ENCODE measurements at regions of chr5 and their contacts with region 1.

Region 1: GRCh38 chr5:40688127-40688761 is 8.5 kb downstream of the PTGER4 start:
- DNase-seq: peak; percentile 97
- ATAC-seq: peak; percentile 63
- H3K4me3 ChIP-seq: peak overlapping the region; percentile 11
- H3K27ac ChIP-seq: peak overlapping the region; percentile 41
- H3K4me1 ChIP-seq: peaks cover 56% of the 10 kb centered on the region
- H3K27me3 ChIP-seq: no peaks in the 10 kb centered on the region
- CTCF ChIP-seq: peak; percentile 96

Region 2: GRCh38 chr5:39578887-39579497 is 1109.3 kb before region 1 on chr5:
- CTCF ChIA-PET with region 1: no interaction called
- POLR2A ChIA-PET with region 1: interaction called, 3 read pairs
- intact Hi-C with region 1: loop called (anchors 1 kb)
- DNase-seq: peak; percentile 65
- ATAC-seq: no peak
- H3K4me3 ChIP-seq: no peak overlapping the region
- H3K27ac ChIP-seq: no peak overlapping the region
- H3K4me1 ChIP-seq: 0 out of 2 replicates have a peak, but pooled peaks cover 3% of the 10 kb centered on the region
- H3K27me3 ChIP-seq: no peaks in the 10 kb centered on the region
- CTCF ChIP-seq: peak; percentile 74

Region 3: DNA sequence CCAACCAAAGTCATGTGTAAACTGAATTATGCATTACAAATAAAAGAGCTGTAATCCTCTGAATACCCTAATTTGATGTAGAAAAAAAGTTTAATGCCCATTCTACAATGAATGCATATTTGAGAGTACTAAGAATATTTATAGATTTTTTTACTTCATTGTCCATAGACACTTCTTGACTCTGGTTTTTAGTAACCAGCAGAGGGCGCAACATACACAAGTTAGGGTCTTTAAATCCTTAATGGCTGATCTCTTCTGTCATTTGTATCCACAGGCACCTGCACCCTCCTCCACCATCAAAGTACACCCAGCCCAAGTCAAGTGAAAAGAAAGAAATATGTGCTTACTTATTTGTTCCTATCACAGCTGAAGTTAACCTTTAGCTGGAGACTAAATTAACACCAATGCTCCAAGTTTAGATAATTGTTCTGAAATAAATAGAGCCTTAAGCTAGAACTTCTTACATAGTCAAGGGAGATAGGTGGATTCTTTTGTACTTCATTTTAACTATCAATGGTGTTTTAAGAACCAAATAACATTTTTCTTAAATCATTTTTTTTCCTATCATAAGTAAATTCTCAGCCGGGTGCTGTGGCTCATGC is 739.3 kb before region 1 on chr5:
- CTCF ChIA-PET with region 1: no interaction called
- POLR2A ChIA-PET with region 1: interaction called, 4 read pairs
- intact Hi-C with region 1: loop called (anchors 1 kb)
- DNase-seq: peak; percentile 89
- ATAC-seq: peak; percentile 81
- H3K4me3 ChIP-seq: no peak overlapping the region
- H3K27ac ChIP-seq: no peak overlapping the region
- H3K4me1 ChIP-seq: no peaks in the 10 kb centered on the region
- H3K27me3 ChIP-seq: no peaks in the 10 kb centered on the region
- CTCF ChIP-seq: peak; percentile 93

Region 4: GRCh38 chr5:40165794-40166728 is 522.2 kb before region 1 on chr5:
- CTCF ChIA-PET with region 1: interaction called, 4 read pairs
- POLR2A ChIA-PET with region 1: no interaction called
- intact Hi-C with region 1: loop called (anchors 1 kb)
- DNase-seq: peak; percentile 55
- ATAC-seq: peak; percentile 66
- H3K4me3 ChIP-seq: no peak overlapping the region
- H3K27ac ChIP-seq: peak overlapping the region; percentile 32
- H3K4me1 ChIP-seq: peaks cover 17% of the 10 kb centered on the region
- H3K27me3 ChIP-seq: no peaks in the 10 kb centered on the region
- CTCF ChIP-seq: peak; percentile 46; the same call in 1 of the 2 replicates

Region 5: DNA sequence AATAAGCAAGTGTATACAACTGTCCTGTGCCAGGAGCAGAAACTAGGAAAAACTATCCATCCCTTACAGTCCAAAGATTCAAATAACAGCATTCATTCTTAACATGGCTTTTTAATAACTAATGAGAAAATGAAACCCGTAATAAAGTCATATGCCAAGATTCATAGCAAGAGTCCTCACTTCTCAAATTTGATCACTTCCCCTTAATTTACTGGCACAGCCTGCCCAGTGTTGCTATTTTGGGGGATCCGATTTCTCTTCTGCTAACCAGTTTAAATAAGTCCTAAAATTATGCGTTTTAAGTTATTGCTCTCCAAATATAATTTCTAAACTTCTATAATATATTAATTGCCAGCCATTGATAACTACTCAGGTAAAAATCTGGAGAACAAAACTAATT is 185.5 kb before region 1 on chr5:
- CTCF ChIA-PET with region 1: no interaction called
- POLR2A ChIA-PET with region 1: no interaction called
- intact Hi-C with region 1: loop called (anchors 1 kb)
- DNase-seq: no peak
- ATAC-seq: no peak
- H3K4me3 ChIP-seq: no peak overlapping the region
- H3K27ac ChIP-seq: peak overlapping the region; percentile 75
- H3K4me1 ChIP-seq: peaks cover 23% of the 10 kb centered on the region
- H3K27me3 ChIP-seq: no peaks in the 10 kb centered on the region
- CTCF ChIP-seq: no peak

Region 6: DNA sequence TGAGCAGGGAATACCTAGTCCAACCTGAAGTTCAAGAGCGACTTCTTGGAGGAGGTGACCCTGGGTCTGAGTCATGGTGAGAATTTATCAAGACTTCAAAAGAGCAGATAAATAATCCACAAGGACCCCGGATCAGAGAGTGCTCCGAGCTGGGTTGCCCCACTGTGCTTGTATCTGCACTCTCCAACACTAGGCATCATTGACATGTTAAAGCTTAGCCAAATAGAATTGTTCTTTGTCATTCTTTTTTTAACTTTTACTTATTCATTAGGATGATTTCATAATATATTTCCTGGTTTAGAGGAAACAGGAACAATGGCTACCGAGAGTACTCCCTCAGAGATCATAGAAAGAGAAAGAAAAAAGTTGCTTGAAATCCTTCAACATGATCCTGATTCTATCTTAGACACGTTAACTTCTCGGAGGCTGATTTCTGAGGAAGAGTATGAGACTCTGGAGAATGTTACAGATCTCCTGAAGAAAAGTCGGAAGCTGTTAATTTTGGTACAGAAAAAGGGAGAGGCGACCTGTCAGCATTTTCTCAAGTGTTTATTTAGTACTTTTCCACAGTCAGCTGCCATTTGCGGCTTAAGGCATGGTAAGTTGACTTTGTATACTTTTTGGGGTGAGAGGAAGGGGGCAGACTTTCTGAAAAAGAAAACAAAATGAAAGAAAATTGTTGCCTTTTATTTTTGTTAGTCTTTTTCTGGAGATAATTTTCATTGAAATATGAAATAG is 153.0 kb after region 1 on chr5 and contains the start of gene CARD6:
- CTCF ChIA-PET with region 1: no interaction called
- POLR2A ChIA-PET with region 1: no interaction called
- intact Hi-C with region 1: no loop called
- DNase-seq: peak; percentile 35
- ATAC-seq: no peak; the same call in 1 of the 2 replicates
- H3K4me3 ChIP-seq: peak within 1 kb of the TSS; percentile 58
- H3K27ac ChIP-seq: peak within 1 kb of the TSS; percentile 39
- H3K4me1 ChIP-seq: peaks cover 26% of the 10 kb centered on the region
- H3K27me3 ChIP-seq: no peaks in the 10 kb centered on the region
- CTCF ChIP-seq: peak; percentile 43; the same call in 1 of the 2 replicates
- total RNA-seq, gene CARD6: 1.3 and 2.4 TPM in 2 replicates

Region 7: GRCh38 chr5:40879163-40879942 is 191.1 kb after region 1 on chr5:
- CTCF ChIA-PET with region 1: no interaction called
- POLR2A ChIA-PET with region 1: no interaction called
- intact Hi-C with region 1: loop called (anchors 5 kb)
- DNase-seq: peak; percentile 66
- ATAC-seq: peak; percentile 60; the same call in 1 of the 2 replicates
- H3K4me3 ChIP-seq: no peak overlapping the region
- H3K27ac ChIP-seq: no peak overlapping the region
- H3K4me1 ChIP-seq: no peaks in the 10 kb centered on the region
- H3K27me3 ChIP-seq: no peaks in the 10 kb centered on the region
- CTCF ChIP-seq: peak; percentile 87

Region 8: DNA sequence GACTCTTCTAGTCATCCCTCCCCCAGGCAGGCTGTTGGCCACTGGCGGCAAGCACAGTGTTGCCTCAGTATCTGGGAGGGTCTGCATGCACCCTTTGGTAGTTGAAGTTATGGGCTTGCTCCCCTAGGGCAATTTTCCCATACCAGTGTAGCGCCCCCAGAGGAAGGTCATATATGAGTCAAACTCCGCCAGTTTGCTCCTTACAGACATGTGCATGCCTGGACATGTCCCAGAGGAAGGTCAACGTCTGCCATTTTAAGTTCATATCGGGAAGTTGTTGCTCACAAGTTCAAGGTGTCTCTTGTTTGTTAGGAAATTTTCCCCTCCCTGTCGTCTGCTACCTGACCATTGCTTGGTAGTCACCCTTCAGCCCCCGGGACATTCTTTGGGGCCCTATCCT is 434.2 kb after region 1 on chr5:
- CTCF ChIA-PET with region 1: no interaction called
- POLR2A ChIA-PET with region 1: no interaction called
- intact Hi-C with region 1: no loop called
- DNase-seq: no peak
- ATAC-seq: no peak
- H3K4me3 ChIP-seq: no peak overlapping the region
- H3K27ac ChIP-seq: no peak overlapping the region
- H3K4me1 ChIP-seq: no peaks in the 10 kb centered on the region
- H3K27me3 ChIP-seq: no peaks in the 10 kb centered on the region
- CTCF ChIP-seq: no peak

Measured in PC-3 (cell line).